ENCODE measurements at regions of chr19 and their contacts with region 1.

Region 1: GRCh38 chr19:4400135-4400936 is at the start of gene SH3GL1:
- DNase-seq: peak; percentile 94
- H3K4me3 ChIP-seq: peak within 1 kb of the TSS; percentile 96
- H3K27ac ChIP-seq: peak within 1 kb of the TSS; percentile 69
- H3K4me1 ChIP-seq: peaks cover 38% of the 10 kb centered on the region
- CTCF ChIP-seq: peak; percentile 86
- total RNA-seq, gene SH3GL1: 24.3 and 33.2 TPM in 2 replicates

Region 2: DNA sequence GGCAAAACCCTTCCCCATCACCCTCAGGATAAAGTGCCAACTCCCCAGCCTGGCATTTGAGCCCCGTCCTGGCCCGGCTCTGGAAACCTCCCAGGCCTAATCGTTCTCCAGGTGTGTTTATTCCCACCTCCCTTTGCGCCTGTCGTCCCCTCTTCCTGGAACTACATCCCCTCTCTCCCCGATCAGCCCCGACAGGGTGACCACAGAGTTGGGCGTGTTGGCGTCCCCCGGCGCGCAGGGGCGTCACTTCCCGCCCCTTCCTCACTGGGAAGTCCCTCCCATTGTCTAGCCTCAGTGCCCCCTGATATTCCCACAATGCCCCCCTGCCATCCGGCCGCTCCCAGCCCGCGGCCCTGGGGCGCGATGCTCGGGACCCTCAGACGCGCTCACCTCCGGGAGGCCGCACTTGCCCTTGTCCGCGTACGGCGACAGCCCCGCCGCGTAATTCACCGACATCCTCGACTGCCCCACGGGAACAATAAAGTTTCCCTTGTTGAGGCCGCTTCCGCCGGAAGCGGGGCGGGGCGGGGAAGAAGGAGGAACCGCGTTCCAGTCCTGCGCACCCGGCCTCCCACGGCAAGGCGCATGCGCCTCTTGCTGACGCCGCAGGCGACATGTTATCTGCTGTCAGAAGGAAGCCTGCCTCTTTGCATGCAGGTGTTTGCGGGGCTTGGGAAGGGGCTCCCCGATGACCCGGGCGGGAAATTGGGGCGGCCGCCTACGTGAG is 218.1 kb before region 1 on chr19 and contains the starts of genes ANKRD24 and SIRT6:
- CTCF ChIA-PET with region 1: no interaction called
- POLR2A ChIA-PET with region 1: no interaction called
- intact Hi-C with region 1: no loop called
- DNase-seq: peak; percentile 98
- H3K4me3 ChIP-seq: peak within 1 kb of the TSS; percentile 88
- H3K27ac ChIP-seq: peak within 1 kb of the TSS; percentile 76
- H3K4me1 ChIP-seq: peaks cover 25% of the 10 kb centered on the region
- CTCF ChIP-seq: no peak
- total RNA-seq, gene ANKRD24: 1.7 and 2.8 TPM in 2 replicates
- total RNA-seq, gene SIRT6: 29.1 and 31.7 TPM in 2 replicates

Region 3: GRCh38 chr19:4342615-4343369 is 57.5 kb before region 1 on chr19:
- CTCF ChIA-PET with region 1: interaction called, 3 read pairs
- POLR2A ChIA-PET with region 1: interaction called, 3 read pairs
- intact Hi-C with region 1: loop called (anchors 2 kb)
- DNase-seq: peak; percentile 100
- H3K4me3 ChIP-seq: peak overlapping the region; percentile 74
- H3K27ac ChIP-seq: peak overlapping the region; percentile 75
- H3K4me1 ChIP-seq: peaks cover 15% of the 10 kb centered on the region
- CTCF ChIP-seq: peak; percentile 49

Region 4: DNA sequence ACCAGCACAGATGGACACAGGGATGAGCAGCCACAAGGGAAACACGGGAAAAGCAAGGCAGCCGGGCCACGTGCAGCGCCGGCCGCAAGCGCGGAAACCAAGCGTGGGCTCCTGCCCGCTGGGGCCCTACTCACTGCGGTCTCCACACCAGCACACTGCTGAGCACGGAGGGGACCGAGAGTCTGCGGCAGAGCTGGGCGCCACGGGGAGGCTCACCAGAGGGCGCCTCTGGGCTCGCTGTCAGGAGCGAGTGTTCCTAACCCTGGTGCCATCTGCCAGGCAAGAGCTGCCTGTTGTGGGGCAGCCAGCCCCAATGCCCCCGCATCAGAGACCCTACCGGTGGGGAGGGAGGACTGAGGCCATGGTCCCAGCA is 30.5 kb before region 1 on chr19:
- CTCF ChIA-PET with region 1: no interaction called
- POLR2A ChIA-PET with region 1: no interaction called
- intact Hi-C with region 1: loop called (anchors 1 kb)
- DNase-seq: peak; percentile 69
- H3K4me3 ChIP-seq: peak overlapping the region; percentile 61
- H3K27ac ChIP-seq: peak overlapping the region; percentile 79
- H3K4me1 ChIP-seq: peaks cover 38% of the 10 kb centered on the region
- CTCF ChIP-seq: peak; percentile 80

Region 5: GRCh38 chr19:4375164-4376027 is 24.9 kb before region 1 on chr19:
- CTCF ChIA-PET with region 1: no interaction called
- POLR2A ChIA-PET with region 1: interaction called, 5 read pairs
- intact Hi-C with region 1: loop called (anchors 1 kb)
- DNase-seq: peak; percentile 72
- H3K4me3 ChIP-seq: peak overlapping the region; percentile 34
- H3K27ac ChIP-seq: peak overlapping the region; percentile 43
- H3K4me1 ChIP-seq: peaks cover 54% of the 10 kb centered on the region
- CTCF ChIP-seq: peak; percentile 72

Region 6: GRCh38 chr19:4471403-4472173 is 71.3 kb after region 1 on chr19:
- CTCF ChIA-PET with region 1: no interaction called
- POLR2A ChIA-PET with region 1: interaction called, 4 read pairs
- intact Hi-C with region 1: loop called (anchors 5 kb)
- DNase-seq: peak; percentile 100
- H3K4me3 ChIP-seq: peak overlapping the region; percentile 98
- H3K27ac ChIP-seq: peak overlapping the region; percentile 88
- H3K4me1 ChIP-seq: peaks cover 30% of the 10 kb centered on the region
- CTCF ChIP-seq: no peak

Region 7: DNA sequence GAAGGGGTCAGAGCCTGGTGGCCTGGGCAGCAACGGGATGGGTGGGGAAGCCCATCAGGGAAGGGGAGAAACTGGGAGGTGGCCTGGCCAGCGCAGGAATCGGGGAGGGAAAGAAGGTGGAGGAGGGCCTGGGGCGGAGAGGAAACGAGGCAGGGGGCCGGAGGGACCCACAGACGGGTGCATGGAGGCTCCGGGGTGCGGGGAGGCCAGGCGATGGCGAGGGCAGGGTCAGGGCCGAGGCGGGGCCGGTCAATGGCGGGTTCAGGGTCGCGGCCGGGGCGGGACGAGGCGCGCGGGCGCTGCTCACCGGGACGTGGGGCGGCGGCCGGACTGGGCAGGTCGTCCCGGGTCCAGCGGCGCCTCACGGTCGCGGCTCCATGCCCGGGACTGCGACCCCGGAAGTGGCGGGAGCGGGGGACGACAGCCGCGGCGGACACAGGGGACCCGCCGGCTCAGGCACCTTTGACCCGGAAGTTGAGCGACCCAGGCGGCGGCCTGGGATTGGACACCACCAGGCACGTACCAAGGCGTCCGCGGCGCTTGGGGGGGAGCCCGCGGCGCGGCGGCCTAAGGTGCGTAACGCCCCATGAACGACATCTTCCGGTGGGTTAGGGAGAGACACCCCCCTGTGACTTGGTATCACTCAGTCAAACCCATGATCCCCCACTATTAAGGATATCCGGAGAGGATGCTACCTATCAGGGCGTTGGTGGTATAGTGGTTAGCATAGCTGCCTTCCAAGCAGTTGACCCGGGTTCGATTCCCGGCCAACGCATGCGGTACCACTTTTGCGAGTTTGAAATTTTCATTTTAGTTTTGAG is 323.2 kb after region 1 on chr19 and contains the start of gene DPP9:
- CTCF ChIA-PET with region 1: no interaction called
- POLR2A ChIA-PET with region 1: no interaction called
- intact Hi-C with region 1: no loop called
- DNase-seq: peak; percentile 100
- H3K4me3 ChIP-seq: peak within 1 kb of the TSS; percentile 100
- H3K27ac ChIP-seq: peak within 1 kb of the TSS; percentile 72
- H3K4me1 ChIP-seq: peaks cover 12% of the 10 kb centered on the region
- CTCF ChIP-seq: no peak
- total RNA-seq, gene DPP9: 25.5 and 40.2 TPM in 2 replicates